GM10248 (cell line): ENCODE measurements at regions of chr16 and their contacts with region 1.

Region 1: DNA sequence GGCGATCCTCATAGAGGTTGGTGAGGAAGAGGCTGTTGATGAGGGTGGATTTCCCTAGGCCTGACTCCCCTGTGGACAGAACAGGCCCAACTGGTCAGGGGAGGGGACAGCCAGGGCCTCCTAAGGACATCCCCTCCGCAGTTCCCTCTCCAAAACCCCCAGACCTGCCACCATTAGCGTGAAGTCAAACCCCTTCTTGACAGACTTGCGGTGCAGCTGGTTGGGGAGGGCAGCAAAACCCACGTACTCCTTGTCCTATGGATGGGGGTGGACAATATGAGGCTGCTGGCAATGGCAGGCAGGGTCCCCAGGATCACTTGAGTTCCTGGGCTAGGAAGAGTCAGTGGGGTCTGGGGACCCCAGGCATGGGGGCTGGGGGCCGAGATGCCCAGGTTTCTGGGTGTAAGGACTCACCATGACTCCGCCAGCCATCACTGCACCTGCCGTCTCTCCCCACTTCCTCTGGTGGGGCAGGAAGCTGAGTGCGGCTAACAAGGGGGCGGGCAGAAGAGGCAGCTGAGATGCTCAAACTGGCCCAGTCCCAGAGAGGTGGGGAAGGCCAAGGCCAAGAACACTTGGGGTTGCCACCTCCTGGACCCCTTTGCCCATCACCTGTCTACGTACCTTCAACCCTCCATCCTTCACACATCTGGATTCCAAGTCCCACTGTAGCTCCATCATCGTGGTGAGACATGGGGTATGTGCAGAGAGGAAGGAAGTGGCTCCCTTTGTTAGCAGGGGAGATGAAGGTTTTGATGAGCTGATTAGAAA is at the start of gene SEPTIN1:
- DNase-seq: peak; percentile 73
- CTCF ChIP-seq: no peak

Region 2: GRCh38 chr16:30180741-30181140 is 201.6 kb before region 1 on chr16:
- CTCF ChIA-PET with region 1: no interaction called
- POLR2A ChIA-PET with region 1: no interaction called
- DNase-seq: no peak
- CTCF ChIP-seq: no peak

Region 3: GRCh38 chr16:30395155-30395991 is 13.1 kb after region 1 on chr16 and contains the start of gene ZNF48:
- CTCF ChIA-PET with region 1: interaction called, 23 read pairs
- POLR2A ChIA-PET with region 1: interaction called, 4 read pairs
- DNase-seq: peak; percentile 81
- CTCF ChIP-seq: peak; percentile 62

Region 4: DNA sequence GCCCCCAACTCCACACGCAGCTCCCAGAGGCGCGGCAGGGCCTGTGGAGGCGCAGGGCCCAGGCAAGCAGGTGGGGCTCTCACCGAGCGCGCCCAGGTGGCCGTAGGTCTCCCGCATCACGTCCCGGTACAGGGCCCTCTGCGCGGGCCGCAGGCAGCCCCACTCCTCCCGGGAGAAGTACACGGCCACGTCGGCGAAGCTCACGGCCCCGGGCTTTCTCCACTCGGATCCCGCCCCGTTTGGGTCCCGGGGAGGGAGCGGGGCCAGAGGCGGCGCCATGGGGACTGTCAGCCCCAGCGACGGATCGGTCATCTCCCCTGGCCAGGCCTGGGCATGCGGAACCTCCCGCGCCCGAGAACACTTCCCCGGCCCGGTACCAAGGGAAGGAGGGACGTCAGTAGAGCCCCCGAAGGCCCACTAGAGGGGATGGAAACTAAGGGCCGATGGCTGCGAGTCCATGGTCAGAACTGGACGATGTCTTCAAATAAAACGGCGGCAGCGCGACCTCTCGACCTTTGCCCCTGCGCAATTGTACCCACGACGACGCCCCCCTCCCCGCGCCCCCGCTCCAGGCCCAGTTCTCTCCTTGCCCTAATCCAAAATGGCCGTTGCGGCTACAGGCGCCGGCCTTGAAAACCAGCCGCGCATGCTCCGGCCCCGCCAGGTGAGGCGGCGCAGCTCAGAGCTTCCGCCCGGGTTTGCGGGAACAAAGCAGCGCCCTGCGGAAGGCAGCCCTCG is 152.2 kb after region 1 on chr16 and contains the start of gene ZNF747:
- CTCF ChIA-PET with region 1: no interaction called
- POLR2A ChIA-PET with region 1: no interaction called
- DNase-seq: peak; percentile 92
- CTCF ChIP-seq: peak; percentile 11

Region 5: DNA sequence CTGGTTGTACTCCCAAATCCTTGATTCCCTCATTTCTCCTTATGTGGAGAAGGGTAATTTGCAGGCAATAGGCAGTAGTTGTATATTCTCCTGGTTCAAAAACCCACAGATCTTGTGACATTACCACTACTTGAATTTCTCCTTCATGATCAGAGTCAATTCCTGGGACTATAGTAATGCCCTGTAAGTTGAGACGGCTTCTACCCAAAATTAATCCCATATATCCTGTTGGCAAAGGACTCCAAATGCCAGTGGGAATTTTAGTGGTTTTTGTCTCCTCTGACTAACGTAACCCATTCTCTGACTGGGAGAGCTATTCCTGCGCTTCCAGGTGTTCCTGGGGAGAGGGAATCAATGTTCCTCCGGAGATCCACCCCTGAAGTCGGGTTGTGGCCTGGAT is 239.5 kb after region 1 on chr16:
- CTCF ChIA-PET with region 1: no interaction called
- POLR2A ChIA-PET with region 1: no interaction called
- DNase-seq: no peak
- CTCF ChIP-seq: no peak